B cell (primary cell): ENCODE measurements at regions of chr12 and their contacts with region 1.

Region 1: DNA sequence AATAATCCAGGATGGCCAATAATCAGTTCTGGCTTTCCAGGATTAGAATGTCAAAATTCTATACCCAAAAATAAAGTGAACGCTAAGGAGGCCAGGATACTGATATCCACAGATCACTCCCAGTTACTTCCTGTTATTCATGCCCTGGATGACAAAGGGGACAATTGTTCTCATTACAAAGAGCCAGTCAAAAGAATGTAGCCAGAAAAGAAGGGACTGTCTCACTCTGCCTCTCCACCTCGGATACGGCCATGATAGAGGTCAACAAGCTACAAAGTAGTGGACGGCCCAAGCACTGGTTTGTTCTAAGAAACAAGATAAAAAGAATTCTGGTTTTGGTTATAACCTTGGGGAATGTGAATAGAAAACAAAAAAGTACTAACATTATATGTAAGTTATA is 116.1 kb upstream of the ATF7IP start:
- DNase-seq: no peak
- ATAC-seq: no peak
- H3K4me3 ChIP-seq: no peak overlapping the region
- H3K4me3 Mint-ChIP-seq: no peak overlapping the region
- H3K27ac ChIP-seq: no peak overlapping the region
- H3K27ac Mint-ChIP-seq: no peak overlapping the region
- H3K4me1 ChIP-seq: peaks cover 18 to 28% of the 10 kb centered on the region in 2 donors
- H3K4me1 Mint-ChIP-seq: peaks cover 25% of the 10 kb centered on the region
- H3K27me3 ChIP-seq: no peaks in the 10 kb centered on the region
- H3K27me3 Mint-ChIP-seq: no peaks in the 10 kb centered on the region
- CTCF ChIP-seq: no peak

Region 2: DNA sequence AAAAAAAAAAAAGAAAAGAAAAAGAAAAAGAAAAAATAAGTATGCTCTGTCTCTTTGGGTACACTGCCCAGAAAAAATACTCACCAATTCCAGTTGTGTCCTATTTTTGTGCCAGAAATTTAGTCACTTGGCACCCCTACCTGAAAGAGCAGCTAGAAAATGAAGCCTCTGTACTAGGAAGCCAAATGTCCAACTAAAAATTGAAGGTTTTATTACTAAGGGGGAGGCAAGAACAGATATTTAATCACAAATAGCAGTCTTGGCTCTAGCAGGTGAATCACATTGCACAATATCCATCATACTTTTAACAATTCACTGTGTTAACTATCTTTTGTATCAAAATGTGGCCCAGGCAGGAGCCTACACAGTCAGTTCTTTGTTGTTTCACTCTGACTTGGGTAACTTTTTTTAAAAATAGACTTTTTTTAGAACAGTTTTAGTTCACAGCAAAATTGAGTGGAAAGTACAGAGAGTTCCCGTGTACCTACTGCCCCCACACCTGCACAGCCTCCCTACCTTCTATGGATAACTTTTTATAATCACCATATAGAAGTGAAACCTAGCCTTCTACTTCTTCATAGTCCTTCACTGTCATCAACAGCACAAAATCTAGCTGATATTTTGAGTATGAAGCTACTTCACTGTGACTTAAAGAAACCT is 29.1 kb after region 1 on chr12:
- CTCF ChIA-PET with region 1: interaction called, 4 read pairs
- POLR2A ChIA-PET with region 1: interaction called, 12 read pairs
- intact Hi-C with region 1: no loop called
- DNase-seq: peak; percentile 61
- ATAC-seq: peak; percentile 38
- H3K4me3 ChIP-seq: peak overlapping the region in 1 of 5 experiments; percentile 34
- H3K4me3 Mint-ChIP-seq: peak overlapping the region; percentile 46
- H3K27ac ChIP-seq: peak overlapping the region; percentile 72 to 82
- H3K27ac Mint-ChIP-seq: peak overlapping the region; percentile 92
- H3K4me1 ChIP-seq: peaks cover 65 to 93% of the 10 kb centered on the region in 2 donors
- H3K4me1 Mint-ChIP-seq: peaks cover 63% of the 10 kb centered on the region
- H3K27me3 ChIP-seq: no peaks in the 10 kb centered on the region
- H3K27me3 Mint-ChIP-seq: no peaks in the 10 kb centered on the region
- CTCF ChIP-seq: no peak